MCF 10A (cell line): ENCODE measurements at regions of chr1 and their contacts with region 1.

Region 1: GRCh38 chr1:58783993-58784757 is at the start of gene JUN:
- DNase-seq: peak; percentile 99
- H3K4me3 Mint-ChIP-seq: peak within 1 kb of the TSS; percentile 91
- H3K27ac Mint-ChIP-seq: peak within 1 kb of the TSS; percentile 98
- H3K4me1 Mint-ChIP-seq: peaks cover 21% of the 10 kb centered on the region
- H3K27me3 Mint-ChIP-seq: no peaks in the 10 kb centered on the region
- CTCF ChIP-seq: no peak
- total RNA-seq, gene JUN: 60.6 and 71.5 TPM in 2 replicates

Region 2: GRCh38 chr1:58727363-58727762 is 56.8 kb before region 1 on chr1:
- CTCF ChIA-PET with region 1: no interaction called
- POLR2A ChIA-PET with region 1: interaction called, 19 read pairs
- intact Hi-C with region 1: no loop called
- DNase-seq: peak; percentile 97
- H3K4me3 Mint-ChIP-seq: peak overlapping the region; percentile 28
- H3K27ac Mint-ChIP-seq: peak overlapping the region; percentile 74
- H3K4me1 Mint-ChIP-seq: peaks cover 16% of the 10 kb centered on the region
- H3K27me3 Mint-ChIP-seq: no peaks in the 10 kb centered on the region
- CTCF ChIP-seq: no peak

Region 3: DNA sequence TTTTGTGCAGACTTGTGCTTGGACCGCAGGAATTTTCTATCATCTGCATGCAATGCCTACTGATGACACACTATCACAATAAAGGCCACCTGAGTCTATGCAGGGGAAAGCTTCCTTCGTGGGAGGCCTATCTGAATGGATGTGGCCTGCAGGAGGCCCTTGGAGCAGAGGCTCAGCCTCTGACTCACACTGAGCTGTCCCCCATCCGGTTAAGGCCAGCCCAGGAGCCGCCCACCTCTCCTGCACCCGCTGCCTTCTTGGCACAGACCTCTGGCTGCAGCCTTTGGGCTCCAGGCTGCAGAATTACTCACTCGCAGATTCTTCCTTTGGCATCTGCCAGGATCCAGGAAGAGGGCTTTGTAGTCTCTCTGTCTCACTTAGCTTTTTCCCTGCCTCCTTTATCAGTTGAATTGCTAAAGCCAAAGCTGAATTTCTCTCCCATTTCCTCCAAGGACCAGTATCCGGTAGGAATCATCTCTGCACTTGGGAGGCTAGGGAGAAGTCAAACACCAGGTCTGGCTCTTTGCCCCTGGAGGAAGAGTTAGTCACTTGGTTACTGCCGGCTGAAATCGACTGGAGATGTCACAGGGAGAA is 64.7 kb after region 1 on chr1:
- CTCF ChIA-PET with region 1: interaction called, 4 read pairs
- POLR2A ChIA-PET with region 1: interaction called, 25 read pairs
- intact Hi-C with region 1: loop called (anchors 2 kb)
- DNase-seq: peak; percentile 99
- H3K4me3 Mint-ChIP-seq: peak overlapping the region; percentile 33
- H3K27ac Mint-ChIP-seq: no peak overlapping the region
- H3K4me1 Mint-ChIP-seq: peaks cover 23% of the 10 kb centered on the region
- H3K27me3 Mint-ChIP-seq: no peaks in the 10 kb centered on the region
- CTCF ChIP-seq: no peak

Region 4: DNA sequence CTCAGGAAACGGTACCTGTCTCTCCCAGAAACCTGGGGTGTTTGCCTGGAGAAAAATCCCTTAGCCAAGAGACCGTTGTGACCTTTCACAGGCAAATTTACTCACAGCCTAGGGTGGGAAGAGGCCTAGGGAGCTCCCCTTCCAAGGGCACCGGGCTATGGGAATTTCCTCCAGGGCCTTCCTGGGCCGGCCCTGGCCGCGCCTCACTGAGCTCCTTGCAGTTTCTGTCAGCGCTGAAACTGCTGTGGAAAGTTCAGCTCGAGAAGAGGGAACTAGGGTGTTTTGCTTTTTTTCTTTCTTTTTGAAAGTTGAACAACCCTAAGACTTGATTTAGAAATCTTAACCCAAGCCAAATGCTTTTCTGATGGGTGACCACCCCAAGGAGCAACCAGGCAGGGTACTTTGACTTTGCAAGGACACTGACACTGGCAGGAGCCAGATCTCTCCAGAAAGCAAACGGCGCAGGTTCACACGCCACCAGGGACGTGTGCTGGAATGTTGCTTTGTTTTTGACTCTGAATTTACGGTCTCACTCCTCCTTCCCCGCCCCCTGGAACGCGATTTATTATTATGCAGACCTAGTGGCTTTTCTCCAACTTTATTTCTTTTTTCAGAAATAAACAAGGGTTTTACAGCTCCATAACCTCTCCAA is 229.2 kb after region 1 on chr1:
- CTCF ChIA-PET with region 1: no interaction called
- POLR2A ChIA-PET with region 1: interaction called, 15 read pairs
- intact Hi-C with region 1: no loop called
- DNase-seq: peak; percentile 44
- H3K4me3 Mint-ChIP-seq: no peak overlapping the region
- H3K27ac Mint-ChIP-seq: peak overlapping the region; percentile 50
- H3K4me1 Mint-ChIP-seq: peaks cover 23% of the 10 kb centered on the region
- H3K27me3 Mint-ChIP-seq: no peaks in the 10 kb centered on the region
- CTCF ChIP-seq: no peak

Region 5: GRCh38 chr1:59296358-59297256 is 512.4 kb after region 1 on chr1 and contains the start of gene FGGY:
- CTCF ChIA-PET with region 1: no interaction called
- POLR2A ChIA-PET with region 1: interaction called, 25 read pairs
- intact Hi-C with region 1: loop called (anchors 1 kb)
- DNase-seq: peak; percentile 97
- H3K4me3 Mint-ChIP-seq: peak within 1 kb of the TSS; percentile 89
- H3K27ac Mint-ChIP-seq: peak within 1 kb of the TSS; percentile 87
- H3K4me1 Mint-ChIP-seq: peaks cover 19% of the 10 kb centered on the region
- H3K27me3 Mint-ChIP-seq: no peaks in the 10 kb centered on the region
- CTCF ChIP-seq: no peak
- total RNA-seq, gene FGGY: 8.0 and 10.6 TPM in 2 replicates

Region 6: GRCh38 chr1:59672851-59673572 is 888.8 kb after region 1 on chr1:
- CTCF ChIA-PET with region 1: interaction called, 5 read pairs
- POLR2A ChIA-PET with region 1: interaction called, 67 read pairs
- intact Hi-C with region 1: no loop called
- DNase-seq: peak; percentile 77
- H3K4me3 Mint-ChIP-seq: peak overlapping the region; percentile 59
- H3K27ac Mint-ChIP-seq: peak overlapping the region; percentile 94
- H3K4me1 Mint-ChIP-seq: peaks cover 41% of the 10 kb centered on the region
- H3K27me3 Mint-ChIP-seq: no peaks in the 10 kb centered on the region
- CTCF ChIP-seq: no peak